Mammary epithelial cell (primary cell): ENCODE measurements at regions of chr7 and their contacts with region 1.

Region 1: DNA sequence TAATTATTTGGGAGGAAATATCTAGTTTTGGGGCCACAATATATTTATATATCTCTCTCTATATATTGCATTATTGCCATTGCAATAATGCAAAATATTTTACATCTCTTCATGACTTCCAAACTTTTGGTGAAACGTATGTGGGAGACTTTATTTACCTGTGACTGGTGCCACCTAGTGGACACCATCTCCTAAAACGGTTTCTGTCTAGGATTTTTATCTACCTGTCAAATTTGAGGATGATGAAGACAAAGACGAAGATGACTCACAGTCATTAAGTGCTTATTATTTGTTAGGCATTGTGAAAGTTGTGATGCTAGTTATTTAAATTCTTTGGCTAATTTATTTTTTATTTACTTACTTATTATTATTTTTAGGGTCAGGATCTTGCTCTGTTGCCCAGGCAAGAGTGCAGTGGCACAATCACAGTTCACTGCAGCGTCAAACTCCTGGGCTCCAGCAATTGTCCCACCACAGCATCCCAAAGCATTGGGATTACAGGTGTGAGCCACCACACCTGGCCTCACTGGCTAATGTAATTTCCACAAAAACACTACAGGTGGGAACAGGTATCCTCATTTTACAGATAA is 18.7 kb upstream of the CBLL1 start:
- DNase-seq: peak; percentile 60
- H3K4me3 ChIP-seq: no peak overlapping the region
- H3K27ac ChIP-seq: no peak overlapping the region
- H3K4me1 ChIP-seq: no peaks in the 10 kb centered on the region
- H3K27me3 ChIP-seq: no peaks in the 10 kb centered on the region
- CTCF ChIP-seq: peak; percentile 62

Region 2: DNA sequence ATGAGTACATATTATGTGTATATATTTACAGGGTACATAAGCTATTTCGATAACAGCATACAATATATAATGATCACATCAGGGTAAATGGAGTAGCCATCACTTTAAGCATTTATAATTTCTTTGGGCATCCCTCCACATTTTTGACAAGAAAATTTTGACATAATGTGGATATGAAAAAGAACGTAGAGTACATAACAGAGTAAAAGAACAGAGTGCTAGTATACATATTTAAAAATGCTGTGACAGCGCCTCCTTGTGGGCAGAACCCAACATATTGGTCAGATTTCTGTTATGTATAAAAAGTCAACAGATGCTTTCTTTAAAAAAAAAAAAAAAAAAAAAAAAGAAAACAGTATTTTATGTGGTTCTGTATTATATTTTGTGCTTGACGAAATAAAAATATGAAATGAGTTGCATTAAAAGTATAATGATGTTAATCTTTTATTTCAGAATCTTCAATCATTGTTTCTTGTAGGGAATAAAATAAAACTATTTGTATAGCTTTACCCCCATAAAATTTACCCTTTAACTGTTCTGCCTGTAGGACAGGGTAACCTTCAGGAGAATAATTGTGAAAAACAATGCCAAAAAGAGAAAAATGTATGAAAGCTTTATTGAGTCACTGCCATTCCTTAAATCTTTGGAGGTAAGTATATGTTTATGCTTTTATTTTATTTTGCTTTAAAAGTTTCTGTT is 574.7 kb before region 1 on chr7:
- CTCF ChIA-PET with region 1: no interaction called
- dilution Hi-C with region 1: no loop called
- in situ Hi-C with region 1: no loop called
- intact Hi-C with region 1: loop called (anchors 5 kb)
- DNase-seq: peak; percentile 44
- H3K4me3 ChIP-seq: no peak overlapping the region
- H3K27ac ChIP-seq: no peak overlapping the region
- H3K4me1 ChIP-seq: peaks cover 13% of the 10 kb centered on the region
- H3K27me3 ChIP-seq: no peaks in the 10 kb centered on the region
- CTCF ChIP-seq: peak; percentile 50 to 58

Region 3: DNA sequence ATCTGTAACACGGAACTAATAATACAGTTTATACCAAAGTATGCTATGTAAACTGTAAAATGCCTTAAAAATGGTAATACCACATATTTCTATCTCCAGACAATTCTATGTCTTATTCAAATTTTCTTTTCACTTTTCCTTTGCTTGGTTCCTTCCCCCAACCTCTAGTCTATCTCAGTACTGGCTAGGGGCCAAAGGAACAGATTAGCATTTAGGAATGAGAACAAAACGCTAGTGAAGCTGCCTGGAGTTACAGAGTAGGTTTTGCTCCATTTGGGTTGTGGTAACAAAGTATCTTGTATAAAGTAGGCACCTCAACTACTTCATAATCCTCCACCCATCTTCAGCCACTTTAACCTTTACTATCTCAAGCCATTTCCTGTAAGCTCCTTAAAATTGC is 462.4 kb before region 1 on chr7:
- CTCF ChIA-PET with region 1: no interaction called
- dilution Hi-C with region 1: no loop called
- in situ Hi-C with region 1: no loop called
- intact Hi-C with region 1: no loop called
- DNase-seq: no peak
- H3K4me3 ChIP-seq: no peak overlapping the region
- H3K27ac ChIP-seq: no peak overlapping the region
- H3K4me1 ChIP-seq: no peaks in the 10 kb centered on the region
- H3K27me3 ChIP-seq: no peaks in the 10 kb centered on the region
- CTCF ChIP-seq: no peak

Region 4: GRCh38 chr7:107450970-107451369 is 274.3 kb before region 1 on chr7:
- CTCF ChIA-PET with region 1: no interaction called
- dilution Hi-C with region 1: no loop called
- in situ Hi-C with region 1: loop called (anchors 10 kb)
- intact Hi-C with region 1: no loop called
- DNase-seq: no peak
- H3K4me3 ChIP-seq: no peak overlapping the region
- H3K27ac ChIP-seq: no peak overlapping the region
- H3K4me1 ChIP-seq: peaks cover 9% of the 10 kb centered on the region
- H3K27me3 ChIP-seq: no peaks in the 10 kb centered on the region
- CTCF ChIP-seq: no peak

Region 5: GRCh38 chr7:107563775-107564552 is 161.3 kb before region 1 on chr7 and contains the starts of genes COG5 and DUS4L:
- CTCF ChIA-PET with region 1: no interaction called
- dilution Hi-C with region 1: no loop called
- in situ Hi-C with region 1: no loop called
- intact Hi-C with region 1: loop called (anchors 1 kb)
- DNase-seq: peak; percentile 83
- H3K4me3 ChIP-seq: peak within 1 kb of the TSS; percentile 65 to 98 (median 84)
- H3K27ac ChIP-seq: peak within 1 kb of the TSS; percentile 98
- H3K4me1 ChIP-seq: peaks cover 41% of the 10 kb centered on the region
- H3K27me3 ChIP-seq: no peaks in the 10 kb centered on the region
- CTCF ChIP-seq: no peak
- total RNA-seq, gene COG5: 60.5 to 66.2 TPM
- total RNA-seq, gene DUS4L: 13.0 to 19.0 TPM

Region 6: DNA sequence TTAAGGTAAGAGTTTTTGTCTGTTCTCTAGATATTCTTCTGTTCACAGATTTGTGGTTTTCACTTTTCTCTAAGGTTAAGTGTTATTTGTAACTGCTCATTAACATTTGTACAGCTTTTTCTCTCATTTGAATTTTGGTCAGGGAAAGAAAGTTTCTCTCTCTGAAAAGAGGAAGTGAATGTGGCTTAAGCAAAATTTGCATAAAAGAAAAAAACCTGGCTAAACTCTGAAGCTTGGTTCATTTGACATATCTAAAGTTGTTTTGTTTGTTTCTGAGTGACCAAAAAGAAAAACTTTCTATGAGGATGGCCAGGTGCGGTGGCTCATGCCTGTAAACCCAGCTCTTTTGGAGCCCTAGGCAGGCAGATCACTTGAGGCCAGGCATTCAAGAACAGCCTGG is 86.7 kb before region 1 on chr7:
- CTCF ChIA-PET with region 1: no interaction called
- dilution Hi-C with region 1: loop called (anchors 5 kb)
- in situ Hi-C with region 1: no loop called
- intact Hi-C with region 1: no loop called
- DNase-seq: no peak
- H3K4me3 ChIP-seq: no peak overlapping the region
- H3K27ac ChIP-seq: no peak overlapping the region
- H3K4me1 ChIP-seq: no peaks in the 10 kb centered on the region
- H3K27me3 ChIP-seq: no peaks in the 10 kb centered on the region
- CTCF ChIP-seq: no peak

Region 7: GRCh38 chr7:107661081-107661864 is 64.0 kb before region 1 on chr7:
- CTCF ChIA-PET with region 1: no interaction called
- dilution Hi-C with region 1: no loop called
- in situ Hi-C with region 1: no loop called
- intact Hi-C with region 1: no loop called
- DNase-seq: peak; percentile 70
- H3K4me3 ChIP-seq: peak overlapping the region; percentile 52 to 58 (median 56)
- H3K27ac ChIP-seq: no peak overlapping the region
- H3K4me1 ChIP-seq: peaks cover 8% of the 10 kb centered on the region
- H3K27me3 ChIP-seq: peaks cover 14% of the 10 kb centered on the region
- CTCF ChIP-seq: peak in 1 of 2 donors; percentile 33

Region 8: GRCh38 chr7:108535257-108535656 is 810.0 kb after region 1 on chr7:
- CTCF ChIA-PET with region 1: no interaction called
- dilution Hi-C with region 1: no loop called
- in situ Hi-C with region 1: no loop called
- intact Hi-C with region 1: no loop called
- DNase-seq: no peak
- H3K4me3 ChIP-seq: no peak overlapping the region
- H3K27ac ChIP-seq: no peak overlapping the region
- H3K4me1 ChIP-seq: no peaks in the 10 kb centered on the region
- H3K27me3 ChIP-seq: no peaks in the 10 kb centered on the region
- CTCF ChIP-seq: no peak

Region 9: DNA sequence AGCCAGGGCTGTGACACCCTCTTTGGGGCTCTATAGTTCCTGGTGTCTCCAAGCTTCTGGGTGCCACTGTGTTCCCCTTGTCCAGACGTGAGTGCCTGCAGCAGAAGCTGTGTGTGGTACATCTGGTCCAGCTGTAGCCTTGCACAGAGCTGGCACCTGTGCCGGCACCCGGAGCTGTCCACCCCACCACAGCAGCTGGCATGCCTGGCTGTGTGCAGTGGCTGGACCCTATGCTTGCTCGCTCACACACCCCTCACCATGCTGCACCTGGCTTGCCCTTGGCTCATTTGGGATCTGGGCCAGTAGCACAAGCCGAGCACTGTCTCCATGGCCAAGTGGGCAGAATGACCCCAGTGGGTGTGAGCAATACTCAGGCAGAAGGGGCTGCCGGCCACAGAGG is 855.1 kb after region 1 on chr7:
- CTCF ChIA-PET with region 1: no interaction called
- dilution Hi-C with region 1: no loop called
- in situ Hi-C with region 1: no loop called
- intact Hi-C with region 1: no loop called
- DNase-seq: no peak
- H3K4me3 ChIP-seq: no peak overlapping the region
- H3K27ac ChIP-seq: no peak overlapping the region
- H3K4me1 ChIP-seq: no peaks in the 10 kb centered on the region
- H3K27me3 ChIP-seq: no peaks in the 10 kb centered on the region
- CTCF ChIP-seq: no peak